Activated naive CD4-positive, alpha-beta T cell treated with anti-CD3 and anti-CD28 coated beads for 36 hours (primary cell): ENCODE measurements at regions of chr11 and their contacts with region 1.

Region 1: GRCh38 chr11:93784152-93784934 is at the start of gene MED17:
- DNase-seq: peak; percentile 94
- H3K4me3 Mint-ChIP-seq: peak within 1 kb of the TSS; percentile 99
- H3K27ac Mint-ChIP-seq: peak within 1 kb of the TSS; percentile 98
- H3K4me1 Mint-ChIP-seq: peaks cover 43% of the 10 kb centered on the region
- H3K27me3 Mint-ChIP-seq: no peaks in the 10 kb centered on the region
- total RNA-seq, gene MED17: 19.4 to 22.6 TPM

Region 2: GRCh38 chr11:93197380-93198214 is 586.7 kb before region 1 on chr11 and contains the start of gene SLC36A4:
- CTCF ChIA-PET with region 1: no interaction called
- intact Hi-C with region 1: loop called (anchors 1 kb)
- DNase-seq: peak; percentile 92
- H3K4me3 Mint-ChIP-seq: peak within 1 kb of the TSS; percentile 80
- H3K27ac Mint-ChIP-seq: peak within 1 kb of the TSS; percentile 94
- H3K4me1 Mint-ChIP-seq: peaks cover 14% of the 10 kb centered on the region
- H3K27me3 Mint-ChIP-seq: no peaks in the 10 kb centered on the region
- total RNA-seq, gene SLC36A4: 13.2 to 13.9 TPM

Region 3: DNA sequence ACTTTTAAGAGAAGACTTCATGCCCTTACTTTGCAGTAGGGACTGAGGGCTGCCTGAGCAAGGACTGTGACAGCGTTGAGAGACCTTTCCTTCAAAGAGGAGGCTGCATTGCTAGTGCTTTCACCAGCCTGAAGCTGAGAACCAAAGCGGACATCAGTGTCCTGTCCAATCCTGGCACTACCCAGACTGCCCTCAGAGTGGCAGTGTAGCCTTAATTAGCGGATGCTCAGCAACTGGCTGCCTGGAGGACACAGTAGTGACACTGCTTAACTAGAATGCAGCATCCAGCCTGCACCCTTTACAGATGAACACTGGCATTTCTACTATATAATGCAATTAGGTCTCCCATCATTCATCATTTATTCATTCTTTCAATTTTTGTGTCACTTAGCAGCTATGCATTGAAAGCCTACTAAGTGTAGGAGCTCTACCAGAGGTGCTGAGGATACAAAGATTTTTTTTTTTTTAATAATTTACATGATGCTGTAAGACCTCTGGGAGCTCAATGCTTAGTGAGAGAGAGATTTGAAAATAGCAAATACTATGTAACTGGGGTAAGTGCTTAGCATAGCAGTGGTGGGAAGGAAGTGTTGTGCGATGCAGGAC is 549.6 kb before region 1 on chr11:
- CTCF ChIA-PET with region 1: no interaction called
- intact Hi-C with region 1: loop called (anchors 10 kb)
- DNase-seq: peak; percentile 84
- H3K4me3 Mint-ChIP-seq: no peak overlapping the region
- H3K27ac Mint-ChIP-seq: no peak overlapping the region
- H3K4me1 Mint-ChIP-seq: no peaks in the 10 kb centered on the region
- H3K27me3 Mint-ChIP-seq: peaks cover 21% of the 10 kb centered on the region

Region 4: DNA sequence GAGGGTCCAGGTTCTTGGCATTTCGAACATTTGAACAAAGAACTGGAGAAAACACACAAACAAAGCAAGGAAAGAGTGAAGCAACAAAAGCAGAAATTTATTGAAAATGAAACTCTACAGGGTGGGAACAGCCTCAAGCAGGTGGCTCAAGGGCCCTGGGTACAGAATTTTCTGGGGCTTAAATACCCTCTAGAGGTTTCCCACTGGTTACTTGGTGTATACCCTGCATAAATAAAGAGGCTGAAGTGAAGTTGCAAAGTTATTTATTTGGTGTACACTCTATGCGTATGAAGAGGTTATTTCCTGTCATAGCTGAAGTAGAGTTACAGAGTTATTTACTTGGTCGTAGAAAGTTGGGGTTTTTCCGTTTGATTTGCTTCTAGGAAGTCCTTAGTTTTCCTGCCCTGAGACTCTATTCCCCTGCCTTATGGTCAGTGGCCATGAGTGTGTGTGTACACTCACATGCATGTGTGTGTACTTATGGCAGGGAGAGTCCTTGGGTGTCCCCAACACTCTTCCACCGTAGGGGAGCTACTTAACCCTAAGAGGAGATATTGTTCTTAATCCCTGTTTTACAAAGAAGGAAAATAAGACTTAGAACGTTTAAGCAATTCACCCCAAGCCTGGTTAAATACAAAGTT is 235.5 kb before region 1 on chr11:
- CTCF ChIA-PET with region 1: no interaction called
- intact Hi-C with region 1: loop called (anchors 1 kb)
- DNase-seq: no peak
- H3K4me3 Mint-ChIP-seq: no peak overlapping the region
- H3K27ac Mint-ChIP-seq: no peak overlapping the region
- H3K4me1 Mint-ChIP-seq: peaks cover 10% of the 10 kb centered on the region
- H3K27me3 Mint-ChIP-seq: no peaks in the 10 kb centered on the region

Region 5: GRCh38 chr11:93662177-93662575 is 122.2 kb before region 1 on chr11:
- CTCF ChIA-PET with region 1: no interaction called
- intact Hi-C with region 1: loop called (anchors 1 kb)
- DNase-seq: no peak
- H3K4me3 Mint-ChIP-seq: peak overlapping the region; percentile 84
- H3K27ac Mint-ChIP-seq: peak overlapping the region; percentile 93
- H3K4me1 Mint-ChIP-seq: peaks cover 43% of the 10 kb centered on the region
- H3K27me3 Mint-ChIP-seq: no peaks in the 10 kb centered on the region

Region 6: GRCh38 chr11:94128746-94129511 is 344.6 kb after region 1 on chr11 and contains the start of gene PANX1:
- CTCF ChIA-PET with region 1: no interaction called
- intact Hi-C with region 1: loop called (anchors 1 kb)
- DNase-seq: peak; percentile 71
- H3K4me3 Mint-ChIP-seq: no peak within 1 kb of the TSS
- H3K27ac Mint-ChIP-seq: peak within 1 kb of the TSS; percentile 88
- H3K4me1 Mint-ChIP-seq: peaks cover 21% of the 10 kb centered on the region
- H3K27me3 Mint-ChIP-seq: no peaks in the 10 kb centered on the region
- total RNA-seq, gene PANX1: 5.4 to 5.8 TPM

Region 7: DNA sequence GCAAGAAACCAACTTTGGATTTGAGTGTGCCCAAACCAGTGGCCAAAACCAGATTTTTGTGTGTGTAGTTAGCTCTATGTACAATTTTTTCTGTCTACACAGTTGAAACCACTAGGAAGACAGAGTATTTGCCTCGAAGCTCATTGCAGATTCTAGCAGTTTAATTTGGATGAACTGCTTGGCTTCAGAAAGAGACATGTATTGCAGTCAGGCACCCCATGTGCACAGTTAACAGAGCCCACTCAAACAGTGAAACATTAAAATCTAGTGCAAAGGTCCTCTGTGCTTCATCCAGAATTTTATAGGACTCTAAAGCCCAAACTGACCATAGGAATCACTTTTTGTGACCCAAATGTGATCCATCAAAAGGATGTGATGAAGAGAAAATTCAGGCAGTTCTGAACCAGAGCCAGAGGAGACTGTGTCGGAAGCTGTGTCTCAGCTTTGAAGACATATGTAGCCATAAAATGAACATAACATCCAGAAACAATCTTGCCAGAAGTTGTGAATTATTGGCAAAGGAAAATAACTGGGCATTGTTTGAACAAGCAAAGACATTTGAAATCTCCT is 427.0 kb after region 1 on chr11:
- CTCF ChIA-PET with region 1: no interaction called
- intact Hi-C with region 1: no loop called
- DNase-seq: no peak
- H3K4me3 Mint-ChIP-seq: no peak overlapping the region
- H3K27ac Mint-ChIP-seq: no peak overlapping the region
- H3K4me1 Mint-ChIP-seq: no peaks in the 10 kb centered on the region
- H3K27me3 Mint-ChIP-seq: no peaks in the 10 kb centered on the region

Region 8: DNA sequence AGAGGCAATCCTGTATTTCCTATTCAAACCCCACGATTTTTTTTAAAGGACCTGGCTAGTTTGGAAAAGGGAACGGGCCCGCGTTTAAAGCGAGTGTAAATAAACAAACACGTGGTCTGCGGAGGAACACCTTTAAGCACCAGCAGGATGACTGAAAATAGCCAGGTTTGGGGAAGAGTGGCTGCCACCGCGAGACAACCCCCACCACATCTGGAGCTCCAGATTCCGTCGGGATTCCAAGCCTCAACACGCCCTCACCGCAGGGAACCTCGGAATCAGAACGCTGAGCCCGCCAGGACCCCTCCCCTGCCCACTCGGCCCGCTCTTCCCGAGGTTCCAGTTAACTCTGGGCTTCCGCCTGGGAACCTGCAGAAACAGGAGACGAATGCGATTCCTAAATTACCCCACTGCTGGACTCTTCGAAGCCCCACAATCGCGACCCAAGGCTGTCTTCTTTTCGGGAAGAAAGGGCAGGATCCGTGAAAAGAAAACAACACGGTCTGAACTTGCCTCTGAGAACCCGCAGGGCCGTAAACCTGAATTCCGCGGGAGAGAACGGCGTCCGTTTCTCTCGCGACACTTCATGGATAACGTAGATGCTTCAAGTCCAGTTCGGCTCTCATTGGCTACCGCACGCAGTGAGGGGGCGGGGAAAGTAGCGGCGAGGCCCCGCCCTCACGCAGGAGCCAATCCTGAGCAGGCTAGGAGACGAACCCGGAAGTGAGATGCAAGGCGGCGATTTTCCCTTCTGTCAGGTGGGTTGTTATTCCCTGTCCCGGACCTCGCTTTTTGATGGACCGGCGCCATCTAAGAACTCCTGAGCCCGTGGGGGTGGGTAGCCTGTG is 709.2 kb after region 1 on chr11 and contains the starts of genes ANKRD49 and MRE11:
- CTCF ChIA-PET with region 1: no interaction called
- intact Hi-C with region 1: loop called (anchors 1 kb)
- DNase-seq: peak; percentile 97
- H3K4me3 Mint-ChIP-seq: peak within 1 kb of the TSS; percentile 93
- H3K27ac Mint-ChIP-seq: peak within 1 kb of the TSS; percentile 95
- H3K4me1 Mint-ChIP-seq: peaks cover 25% of the 10 kb centered on the region
- H3K27me3 Mint-ChIP-seq: no peaks in the 10 kb centered on the region
- total RNA-seq, gene ANKRD49: 16.3 to 19.1 TPM
- total RNA-seq, gene MRE11: 33.1 to 37.3 TPM